ENCODE measurements at regions of chr11 and their contacts with region 1.

Region 1: GRCh38 chr11:115504276-115505158 is at the start of gene CADM1:
- DNase-seq: peak; percentile 95
- total RNA-seq, gene CADM1: 36.0 TPM

Region 2: DNA sequence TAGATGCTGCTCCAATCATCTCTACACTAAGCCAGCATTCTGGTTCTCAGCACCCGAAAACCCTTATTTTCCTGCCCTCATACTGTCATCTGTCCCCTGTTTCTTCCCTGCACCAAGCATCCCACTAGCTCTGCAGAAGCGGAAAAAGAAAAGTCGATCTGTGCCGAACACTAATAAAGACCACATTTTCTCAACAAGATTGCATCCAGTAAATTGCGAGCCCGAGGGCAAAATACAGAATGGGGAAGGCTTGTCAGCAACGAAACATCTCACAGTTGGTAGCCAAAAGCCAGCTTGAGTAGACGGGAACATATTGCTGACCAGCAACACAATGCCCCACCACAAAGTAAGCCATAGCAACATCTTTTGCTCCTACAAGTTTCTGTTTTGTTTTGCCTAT is 227.7 kb before region 1 on chr11:
- intact Hi-C with region 1: no loop called
- DNase-seq: no peak

Region 3: GRCh38 chr11:115552151-115552550 is 47.6 kb after region 1 on chr11:
- intact Hi-C with region 1: no loop called
- DNase-seq: no peak

Region 4: GRCh38 chr11:115566180-115566764 is 61.8 kb after region 1 on chr11:
- intact Hi-C with region 1: no loop called
- DNase-seq: no peak

Region 5: GRCh38 chr11:115623021-115623451 is 118.5 kb after region 1 on chr11:
- intact Hi-C with region 1: loop called (anchors 2 kb)
- DNase-seq: peak; percentile 91

Region 6: GRCh38 chr11:115699733-115700132 is 195.2 kb after region 1 on chr11:
- intact Hi-C with region 1: loop called (anchors 10 kb)
- DNase-seq: peak; percentile 68

Region 7: GRCh38 chr11:116224154-116224888 is 719.8 kb after region 1 on chr11:
- intact Hi-C with region 1: loop called (anchors 10 kb)
- DNase-seq: peak; percentile 70

Measured in cardiac septum (tissue), 1 donor.